Naive thymus-derived CD4-positive, alpha-beta T cell (primary cell): ENCODE measurements at regions of chr12 and their contacts with region 1.

Region 1: DNA sequence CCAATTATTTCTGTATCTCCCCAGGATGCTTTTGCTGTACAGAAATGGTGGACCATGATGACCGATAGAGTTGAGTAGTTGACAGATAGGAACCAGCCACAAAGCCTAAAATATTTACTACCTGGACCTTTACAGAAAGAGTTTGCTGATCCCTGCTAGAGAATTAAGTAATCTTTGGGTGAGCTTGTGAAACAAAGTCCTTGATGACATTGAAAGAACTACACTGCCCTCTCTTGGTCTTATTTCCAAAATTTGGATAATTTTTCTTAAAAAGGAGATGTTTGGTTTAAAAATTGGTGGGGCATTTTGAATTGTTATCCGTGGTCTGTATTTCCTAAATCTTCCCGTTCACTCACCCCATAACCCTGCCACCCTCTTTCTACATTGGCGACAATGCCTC is 13.7 kb upstream of the TCTN1 start:
- DNase-seq: peak in 7 of 9 donors; percentile 36 to 69 (median 56)
- ATAC-seq: peak; percentile 70
- H3K4me3 ChIP-seq: no peak overlapping the region
- H3K4me3 Mint-ChIP-seq: no peak overlapping the region
- H3K27ac ChIP-seq: no peak overlapping the region
- H3K27ac Mint-ChIP-seq: peak overlapping the region in 6 of 9 donors; percentile 6 to 63 (median 24)
- H3K4me1 ChIP-seq: no peaks in the 10 kb centered on the region
- H3K4me1 Mint-ChIP-seq: peaks cover 4 to 21% (median 15%) of the 10 kb centered on the region in 7 donors
- H3K27me3 ChIP-seq: no peaks in the 10 kb centered on the region
- H3K27me3 Mint-ChIP-seq: no peaks in the 10 kb centered on the region

Region 2: DNA sequence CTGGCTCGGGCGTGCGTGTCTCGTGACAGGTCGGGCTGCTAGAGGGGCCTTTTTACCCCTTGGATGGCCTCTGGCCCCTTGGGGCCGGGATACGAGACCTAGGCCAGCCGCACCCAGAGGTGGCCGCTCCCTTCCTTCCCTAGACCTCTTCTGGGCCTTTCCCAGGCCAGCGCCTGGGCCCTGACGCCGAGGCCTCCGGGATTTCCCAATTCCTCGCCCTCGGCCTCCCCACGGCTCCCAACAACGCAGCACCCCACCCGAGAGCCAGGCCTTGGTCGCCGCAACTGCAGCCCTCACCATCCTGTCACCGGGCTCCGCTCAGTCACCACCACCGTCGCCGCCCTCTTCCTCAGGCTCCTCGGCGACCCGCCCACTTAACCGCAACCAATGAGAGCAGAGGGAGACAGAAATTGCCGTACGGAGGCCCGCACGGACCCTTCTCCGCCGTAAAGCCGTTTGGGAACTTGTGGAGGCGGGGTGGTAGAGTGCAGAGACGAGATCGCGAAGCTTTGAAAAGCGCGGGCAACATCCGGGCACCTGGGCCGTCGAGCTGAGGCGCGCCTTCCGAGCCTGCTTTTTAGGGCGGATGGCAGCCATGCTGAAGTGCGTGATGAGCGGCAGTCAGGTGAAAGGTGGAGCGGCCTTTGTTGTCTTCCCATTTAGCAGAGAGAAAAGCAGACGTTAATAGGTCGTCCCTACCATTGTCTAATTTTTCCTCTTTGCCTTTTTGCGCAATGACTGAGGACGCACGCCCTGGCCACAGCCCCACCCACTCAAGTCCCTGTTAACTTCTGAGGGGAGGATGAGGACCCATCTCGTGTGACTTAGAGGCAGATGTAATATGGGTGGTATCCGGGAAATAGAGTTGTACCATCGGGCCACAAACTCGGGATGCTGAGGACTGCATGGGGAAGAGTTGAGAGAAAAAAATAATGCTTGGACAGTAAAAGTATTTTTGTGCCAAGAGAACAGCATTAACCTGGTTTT is 98.2 kb before region 1 on chr12 and contains the starts of genes RAD9B and VPS29:
- CTCF ChIA-PET with region 1: interaction called, 10 read pairs
- POLR2A ChIA-PET with region 1: interaction called, 3 read pairs
- intact Hi-C with region 1: loop called (anchors 1 to 2 kb)
- DNase-seq: peak; percentile 91 to 100 (median 99)
- ATAC-seq: peak; percentile 98
- H3K4me3 ChIP-seq: peak within 1 kb of the TSS; percentile 86
- H3K4me3 Mint-ChIP-seq: peak within 1 kb of the TSS; percentile 88 to 100 (median 97)
- H3K27ac ChIP-seq: peak within 1 kb of the TSS; percentile 89
- H3K27ac Mint-ChIP-seq: peak within 1 kb of the TSS; percentile 93 to 100 (median 97)
- H3K4me1 ChIP-seq: peaks cover 20 to 22% of the 10 kb centered on the region in 2 donors
- H3K4me1 Mint-ChIP-seq: peaks cover 22 to 52% (median 39%) of the 10 kb centered on the region in 7 donors
- H3K27me3 ChIP-seq: no peaks in the 10 kb centered on the region
- H3K27me3 Mint-ChIP-seq: peaks cover 0 to 3% (median 0%) of the 10 kb centered on the region in 5 donors
- total RNA-seq, gene RAD9B: 0.60 to 2.9 (median 1.1) TPM
- total RNA-seq, gene VPS29: 78.5 to 131 (median 115) TPM

Region 3: DNA sequence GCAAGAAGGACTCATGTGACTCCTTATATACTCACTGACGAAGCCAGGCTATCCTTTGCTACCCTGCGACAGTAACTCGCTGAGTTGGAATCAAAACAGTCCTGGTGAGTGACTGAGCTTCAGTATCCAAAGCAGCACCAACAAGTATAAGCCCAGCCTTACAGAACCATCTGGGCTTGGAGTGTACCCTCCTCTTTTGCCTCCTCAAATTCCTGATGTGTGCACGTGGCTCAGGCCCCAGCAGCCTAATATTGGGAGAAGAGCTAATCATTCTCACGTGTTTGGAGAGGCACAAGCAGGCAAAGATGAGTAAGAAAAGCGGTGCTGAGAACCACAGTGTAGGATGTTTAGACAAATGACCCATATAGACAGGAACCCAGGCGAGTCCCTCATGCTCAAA is 51.6 kb before region 1 on chr12:
- CTCF ChIA-PET with region 1: interaction called, 171 read pairs
- POLR2A ChIA-PET with region 1: interaction called, 38 read pairs
- intact Hi-C with region 1: loop called (anchors 1 kb)
- DNase-seq: no peak
- ATAC-seq: no peak
- H3K4me3 ChIP-seq: no peak overlapping the region
- H3K4me3 Mint-ChIP-seq: no peak overlapping the region
- H3K27ac ChIP-seq: no peak overlapping the region
- H3K27ac Mint-ChIP-seq: peak overlapping the region in 3 of 9 donors; percentile 28 to 68 (median 55)
- H3K4me1 ChIP-seq: no peaks in the 10 kb centered on the region
- H3K4me1 Mint-ChIP-seq: peaks cover 10 to 55% (median 44%) of the 10 kb centered on the region in 7 donors
- H3K27me3 ChIP-seq: no peaks in the 10 kb centered on the region
- H3K27me3 Mint-ChIP-seq: no peaks in the 10 kb centered on the region

Region 4: GRCh38 chr12:110577717-110578521 is 22.3 kb before region 1 on chr12:
- CTCF ChIA-PET with region 1: interaction called, 33 read pairs
- POLR2A ChIA-PET with region 1: interaction called, 6 read pairs
- intact Hi-C with region 1: loop called (anchors 1 kb)
- DNase-seq: peak in 2 of 9 donors; percentile 22 to 79
- ATAC-seq: peak; percentile 43
- H3K4me3 ChIP-seq: peak overlapping the region; percentile 14
- H3K4me3 Mint-ChIP-seq: peak overlapping the region; percentile 56 to 96 (median 94)
- H3K27ac ChIP-seq: peak overlapping the region; percentile 74
- H3K27ac Mint-ChIP-seq: peak overlapping the region; percentile 67 to 96 (median 85)
- H3K4me1 ChIP-seq: peaks cover 23 to 48% of the 10 kb centered on the region in 2 donors
- H3K4me1 Mint-ChIP-seq: peaks cover 56 to 85% (median 77%) of the 10 kb centered on the region in 7 donors
- H3K27me3 ChIP-seq: no peaks in the 10 kb centered on the region
- H3K27me3 Mint-ChIP-seq: no peaks in the 10 kb centered on the region

Region 5: DNA sequence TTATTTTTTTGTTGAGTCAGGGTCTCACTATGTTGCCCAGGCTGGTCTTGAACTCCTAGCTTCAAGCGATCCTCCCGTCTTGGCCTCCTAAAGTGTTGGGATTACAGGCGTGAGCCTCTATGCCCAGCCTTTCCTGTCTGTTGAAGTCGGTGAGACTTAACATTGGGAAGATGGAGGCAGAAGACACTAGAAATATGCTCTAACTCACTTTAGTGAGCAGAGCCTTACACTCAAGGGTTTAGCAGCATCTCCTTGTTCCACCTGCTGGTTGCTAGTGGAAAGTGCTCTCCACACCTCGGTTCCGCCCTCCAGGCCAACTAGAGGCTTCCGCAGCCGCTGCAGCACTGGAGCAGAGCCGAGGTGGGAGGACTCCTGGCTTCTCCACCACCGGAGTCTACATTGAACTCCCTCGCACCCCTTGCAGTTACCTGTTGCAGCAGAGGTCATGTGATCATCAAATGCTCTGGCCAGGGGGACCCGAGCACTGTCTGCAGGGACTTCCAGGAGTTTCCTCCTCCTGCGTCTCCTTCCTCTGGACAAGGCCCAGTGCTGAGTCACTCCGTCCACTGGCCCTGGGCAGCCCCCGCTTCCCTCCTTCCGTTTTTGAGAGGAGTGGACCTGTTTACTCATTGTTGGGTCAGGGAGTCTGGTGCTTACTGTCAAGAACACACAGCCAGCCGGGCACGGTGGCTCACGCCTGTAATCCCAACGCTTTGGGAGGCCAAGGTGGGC is 98.1 kb after region 1 on chr12:
- CTCF ChIA-PET with region 1: interaction called, 8 read pairs
- POLR2A ChIA-PET with region 1: no interaction called
- intact Hi-C with region 1: loop called (anchors 1 kb)
- DNase-seq: peak; percentile 51 to 87 (median 77)
- ATAC-seq: peak; percentile 96
- H3K4me3 ChIP-seq: no peak overlapping the region
- H3K4me3 Mint-ChIP-seq: peak overlapping the region in 4 of 10 donors; percentile 14 to 69 (median 34)
- H3K27ac ChIP-seq: no peak overlapping the region
- H3K27ac Mint-ChIP-seq: peak overlapping the region in 6 of 9 donors; percentile 49 to 88 (median 74)
- H3K4me1 ChIP-seq: peaks cover 7 to 10% of the 10 kb centered on the region in 2 donors
- H3K4me1 Mint-ChIP-seq: peaks cover 5 to 25% (median 18%) of the 10 kb centered on the region in 7 donors
- H3K27me3 ChIP-seq: no peaks in the 10 kb centered on the region
- H3K27me3 Mint-ChIP-seq: no peaks in the 10 kb centered on the region